Prostate gland (tissue), 2 donors: ENCODE measurements at regions of chr1 and their contacts with region 1.

Region 1: DNA sequence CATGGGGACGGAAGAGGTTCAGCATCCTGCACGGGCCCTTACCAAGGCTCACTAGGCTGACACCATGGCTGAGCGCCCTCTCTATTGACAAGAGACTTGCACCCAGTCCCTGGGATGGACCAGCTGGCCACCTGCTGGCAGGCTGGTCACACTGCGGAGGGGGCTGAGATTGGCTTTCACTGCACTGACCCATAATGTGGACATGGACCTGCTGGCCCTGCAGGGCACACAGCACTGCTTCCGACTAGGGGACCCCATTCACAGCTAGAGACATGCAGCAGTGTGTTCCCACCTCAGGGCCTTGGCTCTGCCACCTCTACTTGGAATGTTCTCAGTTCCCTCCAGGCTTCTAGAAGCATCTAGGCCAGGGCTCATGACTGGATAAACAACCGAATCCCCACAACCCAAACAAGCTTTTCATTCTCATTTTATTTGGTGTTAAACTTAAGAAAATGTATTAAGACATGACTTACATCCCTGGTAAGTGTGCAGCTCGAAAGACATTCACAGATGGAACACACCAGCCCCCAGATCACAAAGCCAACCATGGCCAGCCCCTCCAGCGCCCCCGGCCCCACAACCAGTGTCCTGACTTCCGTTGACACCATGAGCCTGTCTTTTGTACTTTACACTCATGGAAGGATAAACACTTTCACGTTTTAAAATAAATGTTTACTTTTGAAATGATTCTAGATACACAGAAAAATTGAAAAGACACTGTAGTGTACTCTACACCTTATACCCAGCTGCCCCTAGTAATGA is 9.3 kb upstream of the SRARP start:
- DNase-seq: peak; percentile 50
- H3K4me3 ChIP-seq: no peak overlapping the region
- H3K27ac ChIP-seq: no peak overlapping the region
- H3K4me1 ChIP-seq: no peaks in the 10 kb centered on the region
- H3K27me3 ChIP-seq: no peaks in the 10 kb centered on the region
- CTCF ChIP-seq: peak; percentile 29 to 88 (median 82)
- POLR2A ChIP-seq: no peak

Region 2: GRCh38 chr1:15799004-15799936 is 195.5 kb before region 1 on chr1:
- intact Hi-C with region 1: loop called (anchors 5 kb)
- DNase-seq: peak; percentile 65
- H3K4me3 ChIP-seq: no peak overlapping the region
- H3K27ac ChIP-seq: peak overlapping the region; percentile 56 to 60
- H3K4me1 ChIP-seq: peaks cover 25% of the 10 kb centered on the region
- H3K27me3 ChIP-seq: no peaks in the 10 kb centered on the region
- CTCF ChIP-seq: no peak
- POLR2A ChIP-seq: no peak

Region 3: GRCh38 chr1:15816674-15817073 is 178.1 kb before region 1 on chr1:
- intact Hi-C with region 1: loop called (anchors 5 kb)
- DNase-seq: no peak
- H3K4me3 ChIP-seq: no peak overlapping the region
- H3K27ac ChIP-seq: no peak overlapping the region
- H3K4me1 ChIP-seq: no peaks in the 10 kb centered on the region
- H3K27me3 ChIP-seq: no peaks in the 10 kb centered on the region
- CTCF ChIP-seq: no peak
- POLR2A ChIP-seq: no peak